ENCODE measurements at regions of chr1 and their contacts with region 1.

Region 1: GRCh38 chr1:47137925-47138615 is 829 bp downstream of the CYP4A22 start:
- DNase-seq: no peak
- ATAC-seq: no peak
- H3K4me3 ChIP-seq: no peak overlapping the region
- H3K27ac ChIP-seq: no peak overlapping the region
- H3K4me1 ChIP-seq: no peaks in the 10 kb centered on the region
- H3K27me3 ChIP-seq: no peaks in the 10 kb centered on the region
- CTCF ChIP-seq: no peak
- POLR2A ChIP-seq: no peak

Region 2: GRCh38 chr1:46940307-46940706 is 197.8 kb before region 1 on chr1:
- intact Hi-C with region 1: loop called in 1 of 10 experiments (anchors 2 kb)
- DNase-seq: no peak
- ATAC-seq: no peak
- H3K4me3 ChIP-seq: no peak overlapping the region
- H3K27ac ChIP-seq: no peak overlapping the region
- H3K4me1 ChIP-seq: no peaks in the 10 kb centered on the region
- H3K27me3 ChIP-seq: no peaks in the 10 kb centered on the region
- CTCF ChIP-seq: no peak
- POLR2A ChIP-seq: no peak

Region 3: GRCh38 chr1:47627471-47628370 is 489.7 kb after region 1 on chr1:
- intact Hi-C with region 1: no loop called
- DNase-seq: peak in 1 of 5 donors; percentile 7
- ATAC-seq: no peak
- H3K4me3 ChIP-seq: no peak overlapping the region
- H3K27ac ChIP-seq: no peak overlapping the region
- H3K4me1 ChIP-seq: no peaks in the 10 kb centered on the region
- H3K27me3 ChIP-seq: peaks cover 0 to 29% (median 0%) of the 10 kb centered on the region in 9 donors
- CTCF ChIP-seq: no peak
- POLR2A ChIP-seq: no peak

Region 4: GRCh38 chr1:47814612-47815395 is 676.7 kb after region 1 on chr1:
- intact Hi-C with region 1: no loop called
- DNase-seq: peak in 1 of 5 donors; percentile 51
- ATAC-seq: peak; percentile 21 to 52 (median 37)
- H3K4me3 ChIP-seq: no peak overlapping the region
- H3K27ac ChIP-seq: peak overlapping the region in 2 of 12 donors; percentile 26 to 52
- H3K4me1 ChIP-seq: peaks cover 0 to 33% (median 9%) of the 10 kb centered on the region in 12 donors
- H3K27me3 ChIP-seq: no peaks in the 10 kb centered on the region
- CTCF ChIP-seq: no peak
- POLR2A ChIP-seq: no peak

Measured in heart left ventricle (tissue), 16 donors.